K562 (cell line): ENCODE measurements at regions of chr3 and their contacts with region 1.

Region 1: DNA sequence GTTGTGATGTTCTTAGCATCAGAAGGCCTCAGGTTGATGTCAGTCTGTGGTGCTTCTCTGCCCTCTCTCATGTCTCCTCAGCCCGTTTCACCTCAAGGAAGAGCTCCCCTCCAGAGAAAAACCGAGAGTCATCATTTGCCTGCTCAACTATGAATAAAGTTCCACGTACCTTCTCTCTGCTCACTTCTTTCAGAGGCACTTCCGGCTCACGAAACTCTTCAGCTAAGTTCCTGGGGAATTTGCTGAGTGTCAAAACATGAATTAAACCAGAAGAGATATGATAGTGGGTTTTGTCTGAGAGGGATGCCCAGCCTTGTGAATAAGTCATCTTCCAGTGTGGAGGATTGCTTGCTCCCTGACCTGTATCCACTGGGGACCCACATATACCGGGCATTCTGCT is 37.7 kb downstream of the CCR4 start:
- DNase-seq: no peak
- ATAC-seq: no peak; the same call in 2 of the 3 replicates
- H3K4me3 ChIP-seq: no peak overlapping the region
- H3K27ac ChIP-seq: no peak overlapping the region
- H3K4me1 ChIP-seq: no peaks in the 10 kb centered on the region
- H3K27me3 ChIP-seq: no peaks in the 10 kb centered on the region
- CTCF ChIP-seq: no peak
- EP300 ChIP-seq: no peak
- POLR2A ChIP-seq: no peak
- RAD21 ChIP-seq: no peak

Region 2: GRCh38 chr3:32972482-32973146 is 16.6 kb before region 1 on chr3:
- CTCF ChIA-PET with region 1: no interaction called
- POLR2A ChIA-PET with region 1: interaction called, 10 read pairs
- in situ Hi-C with region 1: no loop called
- intact Hi-C with region 1: no loop called
- DNase-seq: peak in 2 of 4 experiments; percentile 65 to 91
- ATAC-seq: peak; percentile 77
- H3K4me3 ChIP-seq: no peak overlapping the region
- H3K27ac ChIP-seq: peak overlapping the region; percentile 67
- H3K4me1 ChIP-seq: peaks cover 5 to 34% of the 10 kb centered on the region in 2 experiments; a peak in 4 of 5 replicates
- H3K27me3 ChIP-seq: no peaks in the 10 kb centered on the region
- CTCF ChIP-seq: no peak
- EP300 ChIP-seq: peak; percentile 88
- POLR2A ChIP-seq: no peak
- RAD21 ChIP-seq: no peak; a peak in 1 of 4 replicates

Region 3: DNA sequence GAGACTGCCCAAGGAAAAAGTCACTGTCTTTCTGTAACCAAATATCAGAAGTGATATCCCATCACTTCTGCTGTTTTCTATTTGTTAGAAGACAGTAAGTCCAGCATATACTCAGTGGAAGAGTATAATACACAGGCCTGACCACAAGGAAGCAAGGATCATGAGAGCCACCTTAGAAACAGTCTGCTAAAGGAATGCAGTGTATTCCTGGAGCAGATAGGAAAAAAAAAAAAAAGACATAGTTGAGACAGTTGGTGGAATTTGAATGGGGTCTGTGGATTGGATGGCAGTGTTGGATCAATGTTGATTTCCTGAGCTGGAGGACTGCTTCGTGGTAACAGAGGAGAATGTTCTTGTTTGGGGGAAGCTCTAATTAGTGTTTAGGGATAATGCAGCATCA is 261.5 kb after region 1 on chr3:
- CTCF ChIA-PET with region 1: no interaction called
- POLR2A ChIA-PET with region 1: no interaction called
- in situ Hi-C with region 1: no loop called
- intact Hi-C with region 1: no loop called
- DNase-seq: no peak
- ATAC-seq: no peak
- H3K4me3 ChIP-seq: no peak overlapping the region
- H3K27ac ChIP-seq: no peak overlapping the region
- H3K4me1 ChIP-seq: no peaks in the 10 kb centered on the region
- H3K27me3 ChIP-seq: no peaks in the 10 kb centered on the region
- CTCF ChIP-seq: no peak
- EP300 ChIP-seq: no peak
- POLR2A ChIP-seq: no peak
- RAD21 ChIP-seq: no peak